ENCODE measurements at regions of chrX and their contacts with region 1.

Region 1: DNA sequence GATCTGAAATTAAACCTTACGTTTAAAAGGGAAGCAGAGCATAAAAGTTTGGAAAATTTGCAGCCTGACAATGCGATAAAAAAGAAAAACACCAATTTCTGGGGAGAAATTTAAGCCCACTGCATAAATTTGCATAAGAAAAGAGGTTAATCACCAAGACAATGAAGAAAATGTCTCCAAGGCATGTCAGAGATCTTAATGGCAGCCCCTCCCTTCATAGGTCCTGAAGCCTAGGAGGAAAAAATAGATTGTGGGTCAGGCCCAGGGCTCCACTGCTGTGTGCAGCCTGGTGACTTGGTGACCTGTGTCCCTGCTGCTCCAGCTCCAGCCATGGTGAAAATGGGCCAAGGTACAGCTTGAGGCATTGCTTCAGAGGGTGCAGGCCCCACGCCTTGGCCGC is 264.0 kb upstream of the CT83 start:
- DNase-seq: no peak
- ATAC-seq: no peak

Region 2: DNA sequence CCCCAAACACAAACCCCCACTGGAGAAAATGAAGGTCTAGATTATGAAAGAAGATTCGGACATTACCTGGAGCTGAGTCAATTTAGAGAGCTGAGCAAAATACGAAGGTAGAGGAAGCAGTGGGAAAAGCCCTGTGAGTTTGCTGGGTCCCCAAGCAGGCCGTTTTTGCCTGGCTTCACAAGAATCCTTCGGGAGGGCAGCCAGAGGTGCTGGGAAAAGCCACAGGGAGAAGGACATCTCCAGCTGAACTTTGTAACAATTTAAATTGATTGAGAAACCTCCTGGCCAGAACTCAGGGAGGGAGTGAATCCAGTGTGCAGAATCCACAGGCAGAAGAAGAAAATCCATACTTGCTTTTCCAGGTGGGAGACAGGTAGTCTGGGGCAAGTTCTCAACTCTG is 55.1 kb after region 1 on chrX:
- intact Hi-C with region 1: loop called (anchors 2 kb)
- DNase-seq: no peak
- ATAC-seq: no peak

Region 3: GRCh38 chrX:118493653-118494297 is 1767.0 kb after region 1 on chrX:
- intact Hi-C with region 1: no loop called
- DNase-seq: no peak
- ATAC-seq: no peak

Measured in sciatic nerve (tissue), 2 donors.